ENCODE measurements at regions of chr5 and their contacts with region 1.

Region 1: GRCh38 chr5:42807722-42808447 is 3.8 kb downstream of the SELENOP start:
- DNase-seq: no peak
- ATAC-seq: peak; percentile 42 to 59
- H3K4me3 ChIP-seq: peak overlapping the region; percentile 61
- H3K27ac ChIP-seq: no peak overlapping the region
- H3K4me1 ChIP-seq: peaks cover 36% of the 10 kb centered on the region
- H3K27me3 ChIP-seq: no peaks in the 10 kb centered on the region
- CTCF ChIP-seq: no peak

Region 2: GRCh38 chr5:42676362-42676761 is 131.5 kb before region 1 on chr5:
- intact Hi-C with region 1: no loop called
- DNase-seq: no peak
- ATAC-seq: no peak
- H3K4me3 ChIP-seq: no peak overlapping the region
- H3K27ac ChIP-seq: no peak overlapping the region
- H3K4me1 ChIP-seq: no peaks in the 10 kb centered on the region
- H3K27me3 ChIP-seq: no peaks in the 10 kb centered on the region
- CTCF ChIP-seq: no peak

Region 3: GRCh38 chr5:42889311-42889933 is 81.5 kb after region 1 on chr5:
- intact Hi-C with region 1: loop called (anchors 5 kb)
- DNase-seq: peak; percentile 63
- ATAC-seq: peak; percentile 94 to 96
- H3K4me3 ChIP-seq: no peak overlapping the region
- H3K27ac ChIP-seq: no peak overlapping the region
- H3K4me1 ChIP-seq: no peaks in the 10 kb centered on the region
- H3K27me3 ChIP-seq: no peaks in the 10 kb centered on the region
- CTCF ChIP-seq: peak; percentile 88

Region 4: GRCh38 chr5:42927730-42928129 is 119.8 kb after region 1 on chr5:
- intact Hi-C with region 1: no loop called
- DNase-seq: no peak
- ATAC-seq: no peak
- H3K4me3 ChIP-seq: no peak overlapping the region
- H3K27ac ChIP-seq: no peak overlapping the region
- H3K4me1 ChIP-seq: no peaks in the 10 kb centered on the region
- H3K27me3 ChIP-seq: peaks cover 10% of the 10 kb centered on the region
- CTCF ChIP-seq: no peak